ENCODE measurements at regions of chr1 and their contacts with region 1.

Region 1: GRCh38 chr1:89429062-89429461 is 65.2 kb downstream of the GBP6 start:
- DNase-seq: no peak
- H3K4me3 Mint-ChIP-seq: no peak overlapping the region
- H3K27ac Mint-ChIP-seq: no peak overlapping the region
- H3K4me1 Mint-ChIP-seq: peaks cover 10% of the 10 kb centered on the region
- H3K27me3 Mint-ChIP-seq: peaks cover 12% of the 10 kb centered on the region

Region 2: DNA sequence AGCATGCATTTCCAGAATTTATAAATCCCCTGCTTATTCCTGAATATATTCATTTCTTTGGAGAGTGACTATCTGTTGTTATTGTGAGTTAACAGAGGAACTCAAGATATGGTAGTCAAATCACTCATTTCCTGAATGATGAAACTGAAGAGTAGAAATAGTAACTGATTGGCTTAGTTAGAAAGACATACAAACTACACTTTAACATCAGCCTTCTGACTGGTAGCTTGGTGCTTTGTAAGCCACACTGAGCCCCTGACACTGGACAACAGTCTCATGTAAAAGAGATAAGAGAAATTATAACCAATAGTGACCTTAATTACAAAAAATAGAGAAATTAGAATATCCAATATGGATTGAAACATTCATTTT is 258.0 kb before region 1 on chr1:
- intact Hi-C with region 1: no loop called
- DNase-seq: no peak
- H3K4me3 Mint-ChIP-seq: no peak overlapping the region
- H3K27ac Mint-ChIP-seq: no peak overlapping the region
- H3K4me1 Mint-ChIP-seq: peaks cover 16% of the 10 kb centered on the region
- H3K27me3 Mint-ChIP-seq: no peaks in the 10 kb centered on the region

Region 3: GRCh38 chr1:89198491-89199072 is 230.5 kb before region 1 on chr1 and contains the start of gene GBP4:
- intact Hi-C with region 1: loop called (anchors 5 kb)
- DNase-seq: peak; percentile 43
- H3K4me3 Mint-ChIP-seq: peak within 1 kb of the TSS; percentile 93
- H3K27ac Mint-ChIP-seq: peak within 1 kb of the TSS; percentile 93
- H3K4me1 Mint-ChIP-seq: peaks cover 88% of the 10 kb centered on the region
- H3K27me3 Mint-ChIP-seq: no peaks in the 10 kb centered on the region
- total RNA-seq, gene GBP4: 36.8 and 37.5 TPM in 2 replicates

Region 4: DNA sequence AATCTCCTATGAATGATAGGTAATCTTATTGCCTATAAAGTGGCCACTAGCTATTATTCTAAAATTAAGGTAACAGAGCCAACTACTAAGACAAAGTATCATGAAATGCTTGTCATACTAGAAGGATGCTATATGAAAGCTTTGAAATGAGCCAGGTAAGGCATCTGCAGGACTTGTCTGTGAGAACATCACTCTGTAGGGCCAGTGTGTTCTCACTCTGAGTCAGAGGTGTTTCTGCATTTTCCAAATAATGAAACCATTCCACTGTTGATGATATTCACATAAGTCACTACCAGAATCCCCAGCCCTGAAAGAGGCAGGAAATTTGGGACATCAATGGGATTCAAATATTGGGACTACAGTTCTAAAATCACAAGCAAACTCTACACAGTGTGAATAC is 130.6 kb before region 1 on chr1:
- intact Hi-C with region 1: loop called (anchors 1 kb)
- DNase-seq: no peak
- H3K4me3 Mint-ChIP-seq: peak overlapping the region; percentile 37
- H3K27ac Mint-ChIP-seq: peak overlapping the region; percentile 75
- H3K4me1 Mint-ChIP-seq: peaks cover 81% of the 10 kb centered on the region
- H3K27me3 Mint-ChIP-seq: no peaks in the 10 kb centered on the region

Region 5: GRCh38 chr1:89381618-89382017 is 47.4 kb before region 1 on chr1:
- intact Hi-C with region 1: loop called (anchors 5 kb)
- DNase-seq: no peak
- H3K4me3 Mint-ChIP-seq: no peak overlapping the region
- H3K27ac Mint-ChIP-seq: no peak overlapping the region
- H3K4me1 Mint-ChIP-seq: peaks cover 10% of the 10 kb centered on the region
- H3K27me3 Mint-ChIP-seq: no peaks in the 10 kb centered on the region

Region 6: GRCh38 chr1:89465201-89465600 is 36.1 kb after region 1 on chr1:
- intact Hi-C with region 1: loop called (anchors 1 kb)
- DNase-seq: no peak
- H3K4me3 Mint-ChIP-seq: no peak overlapping the region
- H3K27ac Mint-ChIP-seq: no peak overlapping the region
- H3K4me1 Mint-ChIP-seq: peaks cover 40% of the 10 kb centered on the region
- H3K27me3 Mint-ChIP-seq: peaks cover 53% of the 10 kb centered on the region

Region 7: GRCh38 chr1:90274376-90274775 is 845.3 kb after region 1 on chr1:
- intact Hi-C with region 1: no loop called
- DNase-seq: no peak
- H3K4me3 Mint-ChIP-seq: no peak overlapping the region
- H3K27ac Mint-ChIP-seq: no peak overlapping the region
- H3K4me1 Mint-ChIP-seq: no peaks in the 10 kb centered on the region
- H3K27me3 Mint-ChIP-seq: no peaks in the 10 kb centered on the region

Measured in activated T-helper 1 cell treated with anti-CD3 and anti-CD28 coated beads, Interleukin-12 subunit alpha, Interleukin-12 subunit beta, Interleukin-2, Interleukin-4 antibody, amounts not matched to agents 30 ng/mL and 10 ng/mL and 1 ng/mL, durations not matched to agents 14 hours and 24 hours and 36 hours (primary cell).